ENCODE measurements at regions of chr15 and their contacts with region 1.

Region 1: GRCh38 chr15:99143655-99144610 is 39.1 kb downstream of the SYNM start:
- DNase-seq: peak; percentile 42 to 92
- H3K4me3 ChIP-seq: no peak overlapping the region
- H3K27ac ChIP-seq: peak overlapping the region; percentile 62 to 75
- H3K4me1 ChIP-seq: peaks cover 0 to 11% of the 10 kb centered on the region in 2 donors
- H3K27me3 ChIP-seq: no peaks in the 10 kb centered on the region
- CTCF ChIP-seq: no peak

Region 2: DNA sequence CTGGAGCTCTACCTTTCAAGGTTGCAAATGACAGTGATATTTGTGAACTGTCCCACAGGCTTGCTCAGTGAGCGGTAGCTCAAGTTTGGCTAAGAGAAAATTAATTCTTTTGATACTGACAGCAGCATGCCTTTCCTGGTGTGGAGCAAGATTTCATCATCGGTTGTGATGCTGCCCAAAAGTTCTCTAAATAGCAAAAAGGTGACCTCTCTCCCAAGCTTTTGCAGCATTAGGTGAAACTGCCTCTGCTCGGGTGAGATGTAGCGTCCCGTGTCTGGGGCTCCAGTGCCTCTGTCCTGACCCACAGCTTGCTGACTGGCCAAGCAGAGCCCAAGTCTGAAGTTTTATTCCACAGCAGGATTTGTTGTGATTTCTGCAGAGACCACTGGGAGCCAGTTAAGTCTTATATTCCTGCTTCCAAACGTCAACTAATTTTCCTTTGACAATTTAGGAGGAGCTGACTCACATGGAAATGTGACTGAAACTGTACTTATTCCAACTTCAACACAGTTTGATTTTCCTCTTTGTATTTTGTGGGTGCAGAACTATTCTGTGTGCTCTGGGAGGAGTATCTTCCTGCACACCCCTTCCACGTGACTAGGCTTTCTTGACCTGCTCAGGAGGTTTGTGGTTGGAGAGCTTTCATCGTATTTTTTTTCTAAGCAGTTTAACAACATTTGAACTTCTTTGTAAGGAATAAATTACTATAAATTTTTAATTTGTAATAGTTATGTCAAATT is 33.2 kb before region 1 on chr15:
- intact Hi-C with region 1: loop called (anchors 2 kb)
- DNase-seq: peak in 1 of 2 donors; percentile 71
- H3K4me3 ChIP-seq: peak overlapping the region in 1 of 2 donors; percentile 32
- H3K27ac ChIP-seq: peak overlapping the region; percentile 79 to 95
- H3K4me1 ChIP-seq: peaks cover 16 to 57% of the 10 kb centered on the region in 2 donors
- H3K27me3 ChIP-seq: no peaks in the 10 kb centered on the region
- CTCF ChIP-seq: no peak

Region 3: DNA sequence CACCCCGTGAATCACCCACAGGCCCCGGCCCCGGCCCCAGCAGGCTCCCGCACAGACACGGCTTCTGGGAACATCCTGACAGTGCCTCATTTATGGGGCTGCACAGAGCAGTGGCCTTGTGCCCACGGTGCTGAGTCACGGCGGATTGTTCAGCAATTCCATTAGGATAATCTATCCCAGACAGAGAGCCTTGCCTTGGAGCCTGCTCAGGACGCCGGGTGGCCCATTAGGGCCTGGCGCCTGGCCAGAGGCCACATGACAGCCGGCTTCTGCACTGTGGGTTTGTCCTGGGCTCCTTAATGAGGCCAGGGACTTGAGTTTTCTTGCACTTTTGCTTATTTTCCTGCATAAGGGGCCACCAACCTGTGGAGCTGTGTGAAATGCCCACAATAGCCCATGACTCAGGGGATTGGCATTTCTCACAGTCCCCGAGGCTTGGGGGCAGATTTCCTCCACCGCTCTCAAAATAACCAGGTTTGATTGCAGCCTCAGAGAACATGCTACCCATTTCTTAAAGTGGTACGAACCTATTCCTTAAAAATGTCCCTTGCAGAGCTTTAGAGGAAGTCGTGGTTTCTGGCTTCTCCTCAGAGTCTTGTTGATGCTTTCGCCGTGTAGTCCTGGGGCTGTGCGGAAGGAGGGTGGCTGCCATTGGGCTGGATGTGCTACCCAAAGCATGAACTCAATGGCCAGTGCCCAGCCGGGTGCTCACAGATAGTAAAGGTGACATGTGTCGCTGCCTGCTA is 20.1 kb before region 1 on chr15:
- intact Hi-C with region 1: loop called (anchors 1 kb)
- DNase-seq: peak; percentile 64 to 96
- H3K4me3 ChIP-seq: peak overlapping the region; percentile 11 to 59
- H3K27ac ChIP-seq: peak overlapping the region; percentile 97 to 98
- H3K4me1 ChIP-seq: peaks cover 27 to 46% of the 10 kb centered on the region in 2 donors
- H3K27me3 ChIP-seq: no peaks in the 10 kb centered on the region
- CTCF ChIP-seq: no peak